Activated CD4-positive, alpha-beta T cell treated with anti-CD3 and anti-CD28 coated beads for 36 hours (primary cell): ENCODE measurements at regions of chr3 and their contacts with region 1.

Region 1: GRCh38 chr3:196568246-196569002 is at the starts of genes FBXO45 and WDR53:
- DNase-seq: peak; percentile 98
- ATAC-seq: peak; percentile 93
- H3K4me3 Mint-ChIP-seq: peak within 1 kb of the TSS; percentile 88
- H3K27ac Mint-ChIP-seq: peak within 1 kb of the TSS; percentile 93
- H3K4me1 Mint-ChIP-seq: peaks cover 45% of the 10 kb centered on the region
- H3K27me3 Mint-ChIP-seq: no peaks in the 10 kb centered on the region
- total RNA-seq, gene FBXO45: 12.7 to 16.2 TPM
- total RNA-seq, gene WDR53: 12.8 to 21.4 TPM

Region 2: DNA sequence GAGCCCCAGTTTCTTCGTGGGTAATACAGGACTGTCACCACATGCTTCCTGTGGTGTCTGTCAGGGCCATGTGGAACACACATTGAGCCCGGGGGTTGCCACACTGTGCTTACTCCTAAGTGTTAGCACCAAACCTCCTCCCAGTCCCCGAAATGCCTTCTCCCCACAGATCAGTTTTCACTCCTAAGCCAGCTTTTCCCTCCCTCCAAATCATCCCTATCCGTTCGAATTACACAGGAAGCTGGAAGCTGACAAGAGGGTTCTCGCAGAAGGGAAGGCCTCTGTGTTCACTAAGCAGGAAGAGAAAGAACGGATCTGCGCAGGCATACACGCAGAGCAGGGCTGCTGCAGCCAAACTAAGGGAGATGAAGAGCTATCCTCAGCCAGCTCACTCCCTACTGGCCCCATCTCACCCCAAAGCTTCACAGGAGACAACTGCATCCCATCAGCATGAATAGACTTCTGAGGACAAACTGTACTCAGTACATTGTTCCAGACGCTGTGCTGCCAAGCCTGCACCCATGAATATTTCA is 1329.8 kb before region 1 on chr3:
- CTCF ChIA-PET with region 1: no interaction called
- POLR2A ChIA-PET with region 1: no interaction called
- intact Hi-C with region 1: no loop called
- DNase-seq: no peak
- ATAC-seq: no peak
- H3K4me3 Mint-ChIP-seq: no peak overlapping the region
- H3K27ac Mint-ChIP-seq: no peak overlapping the region
- H3K4me1 Mint-ChIP-seq: no peaks in the 10 kb centered on the region
- H3K27me3 Mint-ChIP-seq: no peaks in the 10 kb centered on the region

Region 3: GRCh38 chr3:196081791-196082618 is 486.4 kb before region 1 on chr3 and contains the start of gene TFRC:
- CTCF ChIA-PET with region 1: no interaction called
- POLR2A ChIA-PET with region 1: no interaction called
- intact Hi-C with region 1: loop called in 1 of 2 experiments (anchors 1 kb)
- DNase-seq: peak; percentile 98
- ATAC-seq: peak; percentile 92
- H3K4me3 Mint-ChIP-seq: peak within 1 kb of the TSS; percentile 95
- H3K27ac Mint-ChIP-seq: peak within 1 kb of the TSS; percentile 93
- H3K4me1 Mint-ChIP-seq: peaks cover 30% of the 10 kb centered on the region
- H3K27me3 Mint-ChIP-seq: no peaks in the 10 kb centered on the region
- total RNA-seq, gene TFRC: 373 to 520 TPM

Region 4: DNA sequence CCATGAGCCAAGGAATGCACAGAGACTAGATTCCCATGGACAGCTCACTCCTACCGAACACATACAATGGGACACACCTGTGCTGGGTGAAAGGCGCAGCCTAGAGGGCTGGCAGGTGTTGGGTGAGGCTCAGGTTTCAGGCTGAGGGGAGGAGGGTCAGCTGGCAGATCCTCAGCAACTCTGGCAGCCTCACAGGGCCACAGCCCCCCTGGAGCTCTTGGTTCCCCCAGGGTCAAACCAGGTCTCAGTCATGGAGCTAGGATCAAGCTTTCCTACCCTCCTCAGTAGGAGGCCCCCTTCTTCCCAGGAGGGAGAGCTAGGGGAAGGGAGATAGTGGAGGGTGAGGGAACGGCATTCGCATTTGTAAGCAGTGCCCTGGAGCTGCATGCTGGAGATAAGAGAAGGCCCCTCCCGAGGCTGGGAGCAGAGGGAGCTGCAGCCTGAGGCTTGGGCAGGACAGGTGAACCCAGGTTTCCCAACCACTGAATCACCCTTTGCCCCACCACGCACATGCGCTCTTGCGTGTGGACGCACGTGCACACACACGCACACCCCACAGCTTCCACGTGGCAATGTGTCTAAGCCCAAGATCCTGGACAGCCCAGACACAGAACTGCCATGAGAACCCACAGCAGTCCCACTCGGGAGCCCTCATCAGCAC is 460.2 kb before region 1 on chr3:
- CTCF ChIA-PET with region 1: no interaction called
- POLR2A ChIA-PET with region 1: no interaction called
- intact Hi-C with region 1: no loop called
- DNase-seq: no peak
- ATAC-seq: no peak
- H3K4me3 Mint-ChIP-seq: no peak overlapping the region
- H3K27ac Mint-ChIP-seq: no peak overlapping the region
- H3K4me1 Mint-ChIP-seq: peaks cover 20% of the 10 kb centered on the region
- H3K27me3 Mint-ChIP-seq: no peaks in the 10 kb centered on the region

Region 5: GRCh38 chr3:196317687-196318467 is 250.5 kb before region 1 on chr3 and contains the start of gene DYNLT2B:
- CTCF ChIA-PET with region 1: no interaction called
- POLR2A ChIA-PET with region 1: no interaction called
- intact Hi-C with region 1: loop called in 1 of 2 experiments (anchors 1 kb)
- DNase-seq: peak; percentile 93
- ATAC-seq: peak; percentile 92
- H3K4me3 Mint-ChIP-seq: peak within 1 kb of the TSS; percentile 91
- H3K27ac Mint-ChIP-seq: peak within 1 kb of the TSS; percentile 95
- H3K4me1 Mint-ChIP-seq: peaks cover 12% of the 10 kb centered on the region
- H3K27me3 Mint-ChIP-seq: no peaks in the 10 kb centered on the region
- total RNA-seq, gene DYNLT2B: 7.3 to 16.3 TPM

Region 6: GRCh38 chr3:196609343-196609775 is 40.9 kb after region 1 on chr3:
- CTCF ChIA-PET with region 1: interaction called, 3 read pairs
- POLR2A ChIA-PET with region 1: interaction called, 3 read pairs
- intact Hi-C with region 1: loop called in 1 of 2 experiments (anchors 1 kb)
- DNase-seq: peak; percentile 98
- ATAC-seq: peak; percentile 93
- H3K4me3 Mint-ChIP-seq: peak overlapping the region; percentile 39
- H3K27ac Mint-ChIP-seq: peak overlapping the region; percentile 76
- H3K4me1 Mint-ChIP-seq: peaks cover 28% of the 10 kb centered on the region
- H3K27me3 Mint-ChIP-seq: no peaks in the 10 kb centered on the region

Region 7: DNA sequence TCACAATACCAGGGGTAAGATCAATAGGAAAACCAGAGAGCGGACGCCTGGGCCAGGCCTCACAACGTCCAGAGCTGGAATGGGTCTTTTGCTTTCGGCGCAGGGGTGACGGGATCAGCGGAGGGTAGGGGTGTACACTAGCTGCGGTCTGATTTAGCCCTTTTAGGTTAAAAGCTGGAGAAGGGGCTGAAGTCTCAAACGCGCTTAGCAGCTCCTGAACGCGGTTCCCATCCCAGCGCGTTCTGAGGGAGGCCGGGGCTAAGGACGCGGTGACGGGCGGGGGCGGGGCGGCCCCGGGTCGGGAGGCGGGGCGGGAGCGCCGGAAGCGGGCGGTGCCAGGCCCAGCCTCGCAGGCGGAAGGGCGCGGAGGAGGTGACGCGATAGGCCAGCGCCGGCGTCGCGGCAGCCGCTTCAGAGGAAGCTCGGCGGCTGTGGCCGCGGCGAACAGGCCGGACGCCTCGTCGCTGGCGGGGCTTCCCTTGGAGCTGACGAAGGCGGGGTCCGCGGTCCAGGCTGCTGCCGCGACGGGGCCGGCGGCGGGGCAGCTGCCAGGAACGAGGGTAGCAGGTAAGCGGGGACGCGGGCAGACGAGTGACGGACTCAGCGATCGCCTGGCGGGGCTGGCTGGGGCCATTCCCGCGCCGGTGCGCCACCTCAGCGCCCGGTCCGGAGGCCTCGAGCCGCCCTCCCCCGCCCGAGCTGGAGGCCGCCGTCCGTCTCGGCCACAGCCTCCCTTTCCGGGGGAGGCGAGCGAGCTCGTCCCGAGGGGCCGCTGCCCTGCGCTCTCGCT is 299.3 kb after region 1 on chr3 and contains the start of gene SENP5:
- CTCF ChIA-PET with region 1: no interaction called
- POLR2A ChIA-PET with region 1: no interaction called
- intact Hi-C with region 1: loop called in 1 of 2 experiments (anchors 1 kb)
- DNase-seq: peak; percentile 95
- ATAC-seq: peak; percentile 96
- H3K4me3 Mint-ChIP-seq: peak within 1 kb of the TSS; percentile 99
- H3K27ac Mint-ChIP-seq: peak within 1 kb of the TSS; percentile 95
- H3K4me1 Mint-ChIP-seq: peaks cover 24% of the 10 kb centered on the region
- H3K27me3 Mint-ChIP-seq: no peaks in the 10 kb centered on the region
- total RNA-seq, gene SENP5: 27.7 to 33.0 TPM

Region 8: DNA sequence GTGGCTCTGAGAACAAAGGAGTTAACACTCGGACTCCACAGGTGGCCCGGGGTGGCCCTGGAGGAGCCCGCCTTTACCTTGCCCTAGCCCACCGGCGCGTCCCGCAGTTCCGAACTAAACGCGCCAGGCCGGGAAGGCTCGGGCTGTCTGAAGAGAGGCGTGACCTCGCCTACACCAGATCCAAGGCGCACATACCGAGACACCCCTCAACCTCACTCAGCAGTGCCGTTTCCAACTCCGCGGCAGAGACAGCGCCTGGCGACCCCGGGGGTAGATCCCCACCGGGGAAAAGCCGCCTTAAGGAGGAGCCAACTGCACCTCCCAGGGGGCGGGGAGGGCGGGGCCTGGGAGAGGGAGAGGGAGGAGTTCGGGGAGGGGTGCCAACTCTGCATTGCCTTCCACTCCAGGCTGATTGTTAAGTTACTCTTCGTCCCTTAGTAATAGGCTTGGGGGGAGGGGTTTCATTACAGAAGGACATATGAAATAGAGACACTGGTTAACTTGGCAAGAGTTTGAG is 730.0 kb after region 1 on chr3 and contains the start of gene DLG1:
- CTCF ChIA-PET with region 1: no interaction called
- POLR2A ChIA-PET with region 1: no interaction called
- intact Hi-C with region 1: loop called in 1 of 2 experiments (anchors 5 kb)
- DNase-seq: peak; percentile 93
- ATAC-seq: peak; percentile 81
- H3K4me3 Mint-ChIP-seq: peak within 1 kb of the TSS; percentile 92
- H3K27ac Mint-ChIP-seq: peak within 1 kb of the TSS; percentile 93
- H3K4me1 Mint-ChIP-seq: peaks cover 23% of the 10 kb centered on the region
- H3K27me3 Mint-ChIP-seq: peaks cover 20% of the 10 kb centered on the region
- total RNA-seq, gene DLG1: 58.8 to 78.4 TPM